Endothelial cell of umbilical vein (primary cell): ENCODE measurements at regions of chr9 and their contacts with region 1.

Region 1: GRCh38 chr9:121376214-121376830 is 6.3 kb upstream of the STOM start:
- DNase-seq: peak; percentile 51
- H3K4me3 ChIP-seq: no peak overlapping the region
- H3K27ac ChIP-seq: no peak overlapping the region
- H3K4me1 ChIP-seq: no peaks in the 10 kb centered on the region
- H3K27me3 ChIP-seq: no peaks in the 10 kb centered on the region
- CTCF ChIP-seq: peak in 1 of 2 donors; percentile 17
- POLR2A ChIP-seq: no peak

Region 2: DNA sequence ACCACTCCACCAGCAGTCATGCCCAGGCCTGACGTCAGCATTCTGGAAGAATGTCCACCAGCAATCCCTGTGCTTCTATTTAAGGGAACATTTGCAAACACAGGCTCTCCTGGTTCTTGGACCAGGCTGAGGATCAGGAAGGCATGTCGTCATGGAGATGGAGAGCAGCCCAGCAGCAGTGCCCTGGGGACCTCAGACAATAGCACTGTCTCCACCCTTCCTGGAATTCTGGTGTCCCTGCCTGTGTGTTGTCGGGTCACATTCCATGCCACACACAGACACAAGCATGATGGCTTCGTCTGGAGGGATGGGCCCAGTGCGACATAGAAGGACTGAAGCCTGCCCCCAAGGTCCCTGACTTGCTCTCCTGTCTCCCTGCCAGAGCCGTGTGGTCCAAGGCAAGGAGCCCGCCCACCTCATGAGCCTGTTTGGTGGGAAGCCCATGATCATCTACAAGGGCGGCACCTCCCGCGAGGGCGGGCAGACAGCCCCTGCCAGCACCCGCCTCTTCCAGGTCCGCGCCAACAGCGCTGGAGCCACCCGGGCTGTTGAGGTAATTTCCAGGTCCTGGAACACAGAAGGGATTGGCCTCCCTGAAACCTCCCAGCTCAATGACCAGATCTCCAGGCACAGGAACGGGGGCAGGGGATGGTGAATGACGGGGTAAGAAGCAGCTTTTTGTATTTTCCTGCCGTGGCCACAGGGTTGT is 50.0 kb before region 1 on chr9:
- CTCF ChIA-PET with region 1: interaction called, 116 read pairs
- POLR2A ChIA-PET with region 1: no interaction called
- dilution Hi-C with region 1: no loop called
- intact Hi-C with region 1: no loop called
- DNase-seq: peak; percentile 83
- H3K4me3 ChIP-seq: no peak overlapping the region
- H3K27ac ChIP-seq: peak overlapping the region; percentile 50
- H3K4me1 ChIP-seq: peaks cover 28% of the 10 kb centered on the region
- H3K27me3 ChIP-seq: no peaks in the 10 kb centered on the region
- CTCF ChIP-seq: no peak
- POLR2A ChIP-seq: no peak

Region 3: DNA sequence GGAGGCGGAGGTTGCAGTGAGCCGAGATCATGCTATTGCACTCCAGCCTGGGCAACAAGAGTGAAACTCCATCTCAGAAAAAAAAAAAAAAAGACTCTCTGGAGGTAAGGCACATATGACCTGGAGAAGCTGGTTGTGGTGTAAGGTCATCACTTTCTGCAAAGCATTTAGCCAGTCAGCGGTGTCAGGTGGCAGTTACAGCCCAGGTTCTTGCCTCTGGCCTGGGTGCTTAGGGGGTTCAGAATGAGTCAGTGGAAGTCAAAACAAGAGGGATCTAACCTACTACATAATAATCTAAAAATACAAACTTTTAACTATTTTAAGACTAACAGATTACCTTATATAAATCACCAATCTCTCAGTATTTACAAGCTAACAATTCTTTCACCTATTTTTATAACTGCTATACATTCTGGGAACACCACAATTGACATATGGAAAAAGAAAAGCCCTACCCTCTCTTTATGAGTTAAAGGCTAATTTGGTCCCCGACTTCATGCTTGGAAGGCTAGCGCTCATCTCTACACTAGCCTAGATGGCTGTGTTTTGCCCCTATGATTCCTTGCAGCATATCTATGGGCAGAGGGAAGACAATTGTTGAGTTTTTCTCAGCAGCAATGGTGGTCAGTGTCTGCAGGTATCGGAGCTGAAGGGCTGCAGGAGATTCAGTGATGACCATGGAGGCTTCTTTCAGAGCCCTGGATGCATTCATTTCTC is 35.5 kb before region 1 on chr9:
- CTCF ChIA-PET with region 1: interaction called, 20 read pairs
- POLR2A ChIA-PET with region 1: no interaction called
- dilution Hi-C with region 1: no loop called
- intact Hi-C with region 1: no loop called
- DNase-seq: no peak
- H3K4me3 ChIP-seq: no peak overlapping the region
- H3K27ac ChIP-seq: no peak overlapping the region
- H3K4me1 ChIP-seq: no peaks in the 10 kb centered on the region
- H3K27me3 ChIP-seq: no peaks in the 10 kb centered on the region
- CTCF ChIP-seq: no peak
- POLR2A ChIP-seq: no peak

Region 4: GRCh38 chr9:121362813-121363621 is 13.3 kb before region 1 on chr9:
- CTCF ChIA-PET with region 1: interaction called, 21 read pairs
- POLR2A ChIA-PET with region 1: interaction called, 6 read pairs
- dilution Hi-C with region 1: no loop called
- intact Hi-C with region 1: no loop called
- DNase-seq: peak; percentile 75
- H3K4me3 ChIP-seq: no peak overlapping the region
- H3K27ac ChIP-seq: peak overlapping the region; percentile 66
- H3K4me1 ChIP-seq: peaks cover 96% of the 10 kb centered on the region
- H3K27me3 ChIP-seq: no peaks in the 10 kb centered on the region
- CTCF ChIP-seq: no peak
- POLR2A ChIP-seq: no peak

Region 5: DNA sequence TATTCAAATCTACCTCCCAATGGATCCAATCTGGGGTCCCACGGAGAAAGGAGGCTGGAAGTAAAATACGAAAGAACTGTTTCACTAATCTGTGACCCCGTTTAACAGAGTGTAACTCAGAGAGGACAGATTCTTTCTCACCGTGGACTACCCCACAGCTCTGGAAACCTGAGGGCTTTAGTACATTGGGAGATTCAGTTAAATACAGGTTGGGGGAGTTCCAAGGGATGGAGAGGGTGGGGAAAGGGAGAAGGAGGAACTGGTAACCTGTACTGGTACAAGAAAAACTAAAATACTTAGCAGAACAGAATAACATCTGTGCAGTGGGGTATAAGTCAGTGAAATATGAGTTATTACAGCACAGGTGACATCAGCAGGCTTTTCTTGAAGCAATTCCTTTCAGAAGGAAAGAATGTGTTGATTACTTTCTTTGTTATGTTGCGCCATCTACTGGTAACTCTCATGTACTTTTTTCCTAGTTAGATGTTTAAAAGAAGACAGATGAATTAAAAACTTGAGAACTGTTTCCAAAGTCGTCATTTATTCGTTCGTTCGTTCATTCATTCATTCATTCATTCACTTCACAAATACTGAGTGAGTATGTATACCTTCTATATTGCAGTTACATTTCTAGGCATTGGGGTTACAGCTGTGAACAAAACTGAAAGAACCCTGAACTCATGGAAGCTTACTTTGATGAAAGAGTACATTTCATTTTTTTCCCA is 23.7 kb after region 1 on chr9:
- CTCF ChIA-PET with region 1: interaction called, 45 read pairs
- POLR2A ChIA-PET with region 1: no interaction called
- dilution Hi-C with region 1: no loop called
- intact Hi-C with region 1: loop called (anchors 1 kb)
- DNase-seq: peak; percentile 82
- H3K4me3 ChIP-seq: no peak overlapping the region
- H3K27ac ChIP-seq: no peak overlapping the region
- H3K4me1 ChIP-seq: peaks cover 21% of the 10 kb centered on the region
- H3K27me3 ChIP-seq: no peaks in the 10 kb centered on the region
- CTCF ChIP-seq: peak; percentile 25 to 35
- POLR2A ChIP-seq: no peak